HepG2 (cell line): ENCODE measurements at regions of chr1 and their contacts with region 1.

Region 1: DNA sequence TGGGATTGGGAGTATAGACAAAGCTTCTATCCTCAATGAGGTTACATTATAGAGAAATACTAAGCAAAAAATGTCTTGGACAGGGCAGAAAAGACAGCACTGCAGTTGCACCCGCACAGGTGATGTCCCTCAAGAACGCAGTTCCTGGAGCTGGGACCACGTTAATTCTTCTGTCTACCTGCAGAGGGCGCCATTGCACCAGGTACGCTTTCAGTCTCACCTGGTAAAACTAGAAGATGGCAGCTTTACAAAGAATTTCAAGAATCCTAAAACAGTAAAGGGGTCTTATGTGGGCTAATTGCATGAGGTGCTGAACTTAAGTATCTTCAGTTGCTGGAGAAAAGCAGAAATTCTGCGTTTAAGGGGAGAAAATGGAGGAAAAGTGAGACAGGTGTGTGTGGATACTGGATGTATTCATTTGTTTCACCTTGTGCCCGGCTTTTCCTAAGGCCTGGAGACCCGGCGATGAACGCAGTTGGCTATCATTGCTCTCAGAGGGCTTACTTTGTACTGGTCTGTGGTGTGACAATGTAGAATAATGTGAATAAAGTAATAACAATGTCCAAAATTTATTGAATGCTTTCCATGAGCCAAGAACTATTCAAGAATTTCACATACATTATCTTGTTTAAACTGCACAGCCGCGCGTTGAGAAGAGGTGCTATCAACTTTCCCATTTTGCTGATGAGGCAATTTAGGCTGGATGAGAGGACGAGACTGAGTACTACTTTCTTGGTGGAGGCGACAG is 276.3 kb upstream of the GREM2 start:
- DNase-seq: peak; percentile 12
- ATAC-seq: peak; percentile 80
- H3K4me3 ChIP-seq: no peak overlapping the region
- H3K27ac ChIP-seq: no peak overlapping the region
- H3K4me1 ChIP-seq: no peaks in the 10 kb centered on the region
- H3K27me3 ChIP-seq: no peaks in the 10 kb centered on the region
- CTCF ChIP-seq: peak; percentile 80
- EP300 ChIP-seq: no peak
- POLR2A ChIP-seq: no peak
- RAD21 ChIP-seq: peak; percentile 48; the same call in 1 of the 2 replicates

Region 2: DNA sequence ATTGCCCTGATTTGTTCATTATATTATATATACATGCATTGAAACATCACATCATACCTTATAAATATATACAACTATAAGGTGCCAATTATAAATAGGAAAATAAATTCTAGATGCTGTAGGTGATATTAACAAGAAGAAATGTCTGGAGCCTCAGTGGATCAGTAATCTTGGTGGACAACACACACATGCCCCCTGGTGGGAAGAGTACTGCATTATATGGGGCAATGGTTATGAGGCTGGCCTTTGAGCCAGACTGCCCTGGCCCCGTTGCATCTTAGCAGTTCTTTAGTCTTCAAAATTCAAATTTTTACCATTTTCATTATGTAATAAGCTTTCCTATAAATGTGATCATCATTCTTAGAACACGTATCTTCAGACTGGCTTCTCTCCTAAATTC is 58.7 kb after region 1 on chr1:
- CTCF ChIA-PET with region 1: interaction called, 4 read pairs
- POLR2A ChIA-PET with region 1: no interaction called
- in situ Hi-C with region 1: no loop called
- intact Hi-C with region 1: loop called (anchors 1 kb)
- DNase-seq: peak; percentile 16
- ATAC-seq: peak; percentile 87
- H3K4me3 ChIP-seq: no peak overlapping the region
- H3K27ac ChIP-seq: no peak overlapping the region
- H3K4me1 ChIP-seq: no peaks in the 10 kb centered on the region
- H3K27me3 ChIP-seq: no peaks in the 10 kb centered on the region
- CTCF ChIP-seq: peak; percentile 52
- EP300 ChIP-seq: no peak
- POLR2A ChIP-seq: no peak
- RAD21 ChIP-seq: 0 out of 2 replicates have a peak, but pooled peaks have one; percentile 11

Region 3: GRCh38 chr1:241269116-241269515 is 380.9 kb after region 1 on chr1:
- CTCF ChIA-PET with region 1: no interaction called
- POLR2A ChIA-PET with region 1: no interaction called
- in situ Hi-C with region 1: no loop called
- intact Hi-C with region 1: loop called (anchors 2 kb)
- DNase-seq: peak; percentile 2
- ATAC-seq: peak; percentile 69
- H3K4me3 ChIP-seq: no peak overlapping the region
- H3K27ac ChIP-seq: no peak overlapping the region
- H3K4me1 ChIP-seq: no peaks in the 10 kb centered on the region
- H3K27me3 ChIP-seq: no peaks in the 10 kb centered on the region
- CTCF ChIP-seq: peak; percentile 53
- EP300 ChIP-seq: no peak
- POLR2A ChIP-seq: no peak
- RAD21 ChIP-seq: no peak

Region 4: GRCh38 chr1:241485554-241485992 is 597.4 kb after region 1 on chr1:
- CTCF ChIA-PET with region 1: interaction called, 3 read pairs
- POLR2A ChIA-PET with region 1: no interaction called
- in situ Hi-C with region 1: loop called (anchors 25 kb)
- intact Hi-C with region 1: loop called (anchors 2 kb)
- DNase-seq: peak; percentile 25
- ATAC-seq: peak; percentile 88
- H3K4me3 ChIP-seq: no peak overlapping the region
- H3K27ac ChIP-seq: no peak overlapping the region
- H3K4me1 ChIP-seq: no peaks in the 10 kb centered on the region
- H3K27me3 ChIP-seq: no peaks in the 10 kb centered on the region
- CTCF ChIP-seq: peak; percentile 59
- EP300 ChIP-seq: no peak
- POLR2A ChIP-seq: no peak
- RAD21 ChIP-seq: no peak